Heart right ventricle (tissue), 16 donors: ENCODE measurements at regions of chr5 and their contacts with region 1.

Region 1: GRCh38 chr5:1883120-1883924 is 597 bp upstream of the IRX4 start:
- DNase-seq: peak in 1 of 2 donors; percentile 38
- ATAC-seq: peak; percentile 32 to 70 (median 64)
- H3K4me3 ChIP-seq: peak overlapping the region; percentile 21 to 59 (median 45)
- H3K27ac ChIP-seq: peak overlapping the region in 8 of 10 donors; percentile 35 to 75 (median 52)
- H3K4me1 ChIP-seq: peaks cover 0 to 33% (median 25%) of the 10 kb centered on the region in 9 donors
- H3K27me3 ChIP-seq: peaks cover 7 to 98% (median 96%) of the 10 kb centered on the region in 7 donors
- CTCF ChIP-seq: peak in 5 of 9 donors; percentile 19 to 42 (median 28)

Region 2: DNA sequence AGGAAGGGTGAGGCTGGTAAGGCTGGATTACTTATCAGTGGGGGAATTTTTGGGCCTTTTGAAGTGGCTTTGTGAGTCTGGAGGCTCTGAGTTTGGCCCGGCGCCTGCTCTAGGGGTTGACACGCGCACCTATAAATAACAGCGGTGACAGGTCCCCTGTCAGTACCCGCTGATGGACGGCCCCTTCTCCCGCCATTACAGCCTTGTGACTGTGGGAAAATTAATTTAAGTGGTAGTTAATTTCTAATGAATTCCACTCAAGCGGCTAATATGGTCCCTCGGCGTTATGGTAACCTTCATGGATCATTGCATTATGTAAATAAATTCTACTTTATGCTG is 100.1 kb before region 1 on chr5:
- intact Hi-C with region 1: no loop called
- DNase-seq: no peak
- ATAC-seq: peak in 6 of 8 donors; percentile 24 to 73 (median 48)
- H3K4me3 ChIP-seq: no peak overlapping the region
- H3K27ac ChIP-seq: no peak overlapping the region
- H3K4me1 ChIP-seq: no peaks in the 10 kb centered on the region
- H3K27me3 ChIP-seq: peaks cover 0 to 9% (median 0%) of the 10 kb centered on the region in 7 donors
- CTCF ChIP-seq: no peak

Region 3: GRCh38 chr5:1799602-1800471 is 83.5 kb before region 1 on chr5 and contains the start of gene MRPL36:
- intact Hi-C with region 1: loop called in 4 of 10 experiments (anchors 5 to 10 kb)
- DNase-seq: peak; percentile 94 to 96
- ATAC-seq: peak; percentile 86 to 96 (median 94)
- H3K4me3 ChIP-seq: peak within 1 kb of the TSS; percentile 75 to 100 (median 92)
- H3K27ac ChIP-seq: peak within 1 kb of the TSS; percentile 60 to 98 (median 92)
- H3K4me1 ChIP-seq: peaks cover 4 to 61% (median 39%) of the 10 kb centered on the region in 9 donors
- H3K27me3 ChIP-seq: no peaks in the 10 kb centered on the region
- CTCF ChIP-seq: peak in 1 of 9 donors; percentile 8
- total RNA-seq, gene MRPL36: 43.4 to 76.9 (median 49.8) TPM

Region 4: DNA sequence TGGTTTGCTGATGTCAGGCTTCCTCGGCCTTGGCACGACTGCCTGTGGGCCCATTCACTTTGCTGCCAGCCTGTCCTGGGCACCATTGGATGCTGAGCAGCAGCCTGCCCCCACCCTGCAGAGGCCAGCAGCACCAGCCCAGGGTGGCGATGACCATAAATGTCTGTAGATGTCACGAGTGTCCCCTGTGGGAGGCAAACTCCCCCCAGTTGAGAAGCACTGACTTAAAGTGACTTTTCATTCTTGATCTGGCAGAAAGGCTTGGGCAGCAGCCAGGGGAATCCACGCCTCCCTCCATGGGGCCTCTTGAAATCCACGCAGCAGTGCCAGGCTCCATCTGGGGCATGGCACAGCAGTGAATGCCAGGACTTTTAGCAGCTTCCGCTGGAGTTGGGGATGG is 22.4 kb before region 1 on chr5:
- intact Hi-C with region 1: loop called in 1 of 10 experiments (anchors 2 kb)
- DNase-seq: peak; percentile 47 to 56
- ATAC-seq: peak; percentile 57 to 88 (median 78)
- H3K4me3 ChIP-seq: no peak overlapping the region
- H3K27ac ChIP-seq: peak overlapping the region in 2 of 10 donors; percentile 5 to 7
- H3K4me1 ChIP-seq: peaks cover 0 to 13% (median 3%) of the 10 kb centered on the region in 9 donors
- H3K27me3 ChIP-seq: peaks cover 0 to 37% (median 26%) of the 10 kb centered on the region in 7 donors
- CTCF ChIP-seq: no peak

Region 5: GRCh38 chr5:1917832-1918487 is 34.6 kb after region 1 on chr5:
- intact Hi-C with region 1: no loop called
- DNase-seq: no peak
- ATAC-seq: no peak
- H3K4me3 ChIP-seq: no peak overlapping the region
- H3K27ac ChIP-seq: no peak overlapping the region
- H3K4me1 ChIP-seq: no peaks in the 10 kb centered on the region
- H3K27me3 ChIP-seq: peaks cover 0 to 7% (median 0%) of the 10 kb centered on the region in 7 donors
- CTCF ChIP-seq: no peak

Region 6: GRCh38 chr5:1930880-1931603 is 47.7 kb after region 1 on chr5:
- intact Hi-C with region 1: loop called in 1 of 10 experiments (anchors 5 kb)
- DNase-seq: peak; percentile 16 to 54
- ATAC-seq: peak; percentile 77 to 90 (median 82)
- H3K4me3 ChIP-seq: peak overlapping the region; percentile 10 to 68 (median 54)
- H3K27ac ChIP-seq: peak overlapping the region; percentile 53 to 86 (median 84)
- H3K4me1 ChIP-seq: peaks cover 0 to 15% (median 0%) of the 10 kb centered on the region in 9 donors
- H3K27me3 ChIP-seq: peaks cover 0 to 43% (median 21%) of the 10 kb centered on the region in 7 donors
- CTCF ChIP-seq: no peak

Region 7: DNA sequence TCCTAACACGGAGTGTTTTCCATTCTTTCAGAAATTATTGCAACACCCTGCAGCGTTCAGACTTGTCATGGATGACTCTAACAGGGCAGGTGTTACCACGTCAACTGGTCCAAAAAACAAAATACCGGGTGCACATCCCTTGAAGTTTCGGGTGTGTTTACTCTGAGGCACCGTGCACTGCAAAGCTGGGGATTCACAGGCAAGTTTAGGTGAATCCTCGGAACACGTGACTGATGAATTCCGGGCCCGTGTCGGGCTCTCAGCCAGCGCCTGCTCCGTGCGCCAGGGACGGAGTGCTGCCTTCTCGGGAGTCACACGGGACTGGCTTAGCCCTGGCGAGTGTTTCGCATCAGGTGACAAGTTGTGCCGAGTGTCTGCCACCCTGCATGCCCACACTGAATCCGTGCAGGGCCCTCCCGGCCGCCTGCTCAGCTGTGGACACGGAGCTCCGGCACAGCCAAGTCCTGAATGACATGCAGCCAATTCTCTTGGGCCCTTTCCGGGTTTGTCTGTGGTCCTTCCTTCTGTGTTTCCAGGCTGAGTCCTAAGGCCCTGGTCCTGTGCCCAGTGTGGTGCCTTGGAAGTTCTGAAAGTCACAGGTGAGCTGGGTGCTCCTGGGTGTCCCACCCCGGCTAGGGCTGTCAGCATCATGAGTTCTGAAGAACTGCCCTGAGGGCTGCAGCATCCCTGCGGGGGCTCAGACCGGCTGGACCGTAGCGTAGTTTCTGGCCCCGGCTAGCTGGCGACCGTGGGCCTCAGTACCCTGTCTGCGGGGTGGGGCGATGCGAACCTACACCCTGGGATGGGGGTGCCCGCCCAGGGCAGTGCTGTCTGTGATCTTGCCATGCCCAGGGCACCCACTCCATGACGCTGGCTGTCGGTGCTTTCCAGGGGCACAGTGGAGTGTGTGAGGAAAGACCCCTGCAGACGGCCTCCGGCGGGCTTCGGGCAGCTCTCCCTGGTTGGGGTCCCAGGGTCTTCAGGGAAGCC is 65.6 kb after region 1 on chr5:
- intact Hi-C with region 1: loop called in 1 of 10 experiments (anchors 5 kb)
- DNase-seq: peak; percentile 72 to 80
- ATAC-seq: peak; percentile 79 to 94 (median 90)
- H3K4me3 ChIP-seq: peak overlapping the region in 6 of 10 donors; percentile 10 to 26 (median 18)
- H3K27ac ChIP-seq: peak overlapping the region in 9 of 10 donors; percentile 5 to 71 (median 42)
- H3K4me1 ChIP-seq: peaks cover 0 to 34% (median 23%) of the 10 kb centered on the region in 9 donors
- H3K27me3 ChIP-seq: peaks cover 0 to 17% (median 0%) of the 10 kb centered on the region in 7 donors
- CTCF ChIP-seq: no peak

Region 8: DNA sequence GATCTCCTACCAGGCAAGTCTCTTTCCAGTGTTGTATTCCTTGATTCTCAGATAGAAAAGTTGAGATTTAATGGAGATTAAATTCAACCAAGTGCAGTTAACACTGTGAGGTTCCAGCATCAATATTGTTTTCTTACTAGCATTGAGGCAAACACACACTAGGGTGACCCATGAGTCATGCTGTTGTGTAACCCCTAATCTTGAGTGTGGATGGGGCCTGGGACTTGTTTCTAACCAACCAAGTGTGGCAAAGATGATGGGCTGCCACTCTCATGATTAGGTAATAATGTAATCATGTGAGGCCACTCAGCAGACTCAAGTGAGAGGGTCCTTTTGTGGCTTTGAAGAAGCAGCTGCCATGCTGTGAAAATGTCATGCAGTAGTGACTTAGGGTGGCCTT is 474.0 kb after region 1 on chr5:
- intact Hi-C with region 1: no loop called
- DNase-seq: no peak
- ATAC-seq: no peak
- H3K4me3 ChIP-seq: no peak overlapping the region
- H3K27ac ChIP-seq: no peak overlapping the region
- H3K4me1 ChIP-seq: no peaks in the 10 kb centered on the region
- H3K27me3 ChIP-seq: no peaks in the 10 kb centered on the region
- CTCF ChIP-seq: no peak